CD4-positive, alpha-beta memory T cell (primary cell): ENCODE measurements at regions of chr17 and their contacts with region 1.

Region 1: GRCh38 chr17:82022981-82023374 is at the start of gene LRRC45:
- DNase-seq: peak; percentile 99 to 100 (median 100)
- H3K4me3 ChIP-seq: peak within 1 kb of the TSS; percentile 44 to 72
- H3K4me3 Mint-ChIP-seq: peak within 1 kb of the TSS; percentile 81 to 89 (median 86)
- H3K27ac ChIP-seq: peak within 1 kb of the TSS; percentile 65
- H3K27ac Mint-ChIP-seq: peak within 1 kb of the TSS in 6 of 7 donors; percentile 68 to 89 (median 78)
- H3K4me1 ChIP-seq: peaks cover 28% of the 10 kb centered on the region
- H3K4me1 Mint-ChIP-seq: peaks cover 3 to 30% (median 18%) of the 10 kb centered on the region in 4 donors
- H3K27me3 ChIP-seq: no peaks in the 10 kb centered on the region
- H3K27me3 Mint-ChIP-seq: no peaks in the 10 kb centered on the region
- total RNA-seq, gene LRRC45: 18.0 to 18.7 TPM

Region 2: DNA sequence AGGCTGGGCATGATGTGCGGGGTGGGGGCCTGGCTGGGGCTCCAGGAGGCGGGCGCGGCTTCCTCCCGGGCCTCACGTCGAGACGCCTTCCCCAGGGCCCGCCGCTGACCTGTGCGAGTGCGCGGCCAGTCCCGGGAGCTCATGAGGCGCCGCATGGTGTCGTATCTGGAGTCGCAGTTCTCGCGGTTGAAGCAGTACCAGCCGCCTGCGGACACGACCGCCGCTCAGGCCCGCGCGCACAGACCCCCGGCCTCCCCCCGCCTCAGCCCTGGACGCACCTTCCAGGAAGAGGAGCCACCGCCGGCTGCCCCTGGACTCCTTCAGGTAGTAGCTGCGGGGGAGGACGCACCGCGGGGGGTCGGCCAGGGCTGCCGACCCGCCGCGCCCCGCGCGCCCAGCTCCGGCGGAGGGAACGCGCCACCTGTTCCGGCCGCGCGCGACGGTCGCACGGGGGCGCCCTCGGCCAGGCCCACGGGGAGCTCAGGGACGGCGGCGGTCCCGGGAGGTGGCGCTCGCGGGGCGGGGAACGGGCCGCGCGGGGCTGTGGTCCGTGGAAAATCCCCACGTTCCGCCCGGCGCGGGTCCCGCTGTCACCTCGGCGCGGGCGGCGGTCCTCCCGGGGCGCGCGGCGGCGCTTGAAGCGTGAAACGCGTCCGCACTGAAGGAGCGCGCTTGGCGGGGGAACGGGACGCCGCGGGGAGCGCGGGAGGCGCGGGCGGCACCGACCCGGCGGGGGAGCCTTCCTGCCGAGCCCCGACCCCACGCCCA is 63.4 kb before region 1 on chr17:
- CTCF ChIA-PET with region 1: interaction called, 81 read pairs
- POLR2A ChIA-PET with region 1: interaction called, 57 read pairs
- intact Hi-C with region 1: loop called (anchors 1 kb)
- DNase-seq: peak; percentile 76 to 88 (median 84)
- H3K4me3 ChIP-seq: peak overlapping the region in 1 of 2 donors; percentile 37
- H3K4me3 Mint-ChIP-seq: peak overlapping the region in 4 of 8 donors; percentile 45 to 66 (median 58)
- H3K27ac ChIP-seq: no peak overlapping the region
- H3K27ac Mint-ChIP-seq: peak overlapping the region in 1 of 7 donors; percentile 69
- H3K4me1 ChIP-seq: peaks cover 7% of the 10 kb centered on the region
- H3K4me1 Mint-ChIP-seq: peaks cover 0 to 3% (median 0%) of the 10 kb centered on the region in 4 donors
- H3K27me3 ChIP-seq: peaks cover 30% of the 10 kb centered on the region
- H3K27me3 Mint-ChIP-seq: peaks cover 2 to 12% of the 10 kb centered on the region in 2 donors

Region 3: GRCh38 chr17:81977211-81978027 is 45.6 kb before region 1 on chr17 and contains the start of gene ASPSCR1:
- CTCF ChIA-PET with region 1: interaction called, 5 read pairs
- POLR2A ChIA-PET with region 1: interaction called, 7 read pairs
- intact Hi-C with region 1: loop called (anchors 1 kb)
- DNase-seq: peak; percentile 86 to 95 (median 92)
- H3K4me3 ChIP-seq: peak within 1 kb of the TSS; percentile 69 to 74
- H3K4me3 Mint-ChIP-seq: peak within 1 kb of the TSS; percentile 90 to 98 (median 96)
- H3K27ac ChIP-seq: peak within 1 kb of the TSS; percentile 80
- H3K27ac Mint-ChIP-seq: peak within 1 kb of the TSS; percentile 94 to 99 (median 98)
- H3K4me1 ChIP-seq: peaks cover 31% of the 10 kb centered on the region
- H3K4me1 Mint-ChIP-seq: peaks cover 17 to 43% (median 28%) of the 10 kb centered on the region in 4 donors
- H3K27me3 ChIP-seq: no peaks in the 10 kb centered on the region
- H3K27me3 Mint-ChIP-seq: no peaks in the 10 kb centered on the region
- total RNA-seq, gene ASPSCR1: 40.4 to 40.6 TPM

Region 4: GRCh38 chr17:82065638-82066303 is 42.8 kb after region 1 on chr17 and contains the start of gene DUS1L:
- CTCF ChIA-PET with region 1: no interaction called
- POLR2A ChIA-PET with region 1: interaction called, 14 read pairs
- intact Hi-C with region 1: no loop called
- DNase-seq: peak; percentile 44 to 78 (median 70)
- H3K4me3 ChIP-seq: peak within 1 kb of the TSS; percentile 42 to 73
- H3K4me3 Mint-ChIP-seq: peak within 1 kb of the TSS; percentile 81 to 89 (median 86)
- H3K27ac ChIP-seq: peak within 1 kb of the TSS; percentile 66
- H3K27ac Mint-ChIP-seq: peak within 1 kb of the TSS; percentile 91 to 97 (median 94)
- H3K4me1 ChIP-seq: peaks cover 28% of the 10 kb centered on the region
- H3K4me1 Mint-ChIP-seq: peaks cover 0 to 23% (median 12%) of the 10 kb centered on the region in 4 donors
- H3K27me3 ChIP-seq: no peaks in the 10 kb centered on the region
- H3K27me3 Mint-ChIP-seq: no peaks in the 10 kb centered on the region
- total RNA-seq, gene DUS1L: 139 to 141 TPM

Region 5: DNA sequence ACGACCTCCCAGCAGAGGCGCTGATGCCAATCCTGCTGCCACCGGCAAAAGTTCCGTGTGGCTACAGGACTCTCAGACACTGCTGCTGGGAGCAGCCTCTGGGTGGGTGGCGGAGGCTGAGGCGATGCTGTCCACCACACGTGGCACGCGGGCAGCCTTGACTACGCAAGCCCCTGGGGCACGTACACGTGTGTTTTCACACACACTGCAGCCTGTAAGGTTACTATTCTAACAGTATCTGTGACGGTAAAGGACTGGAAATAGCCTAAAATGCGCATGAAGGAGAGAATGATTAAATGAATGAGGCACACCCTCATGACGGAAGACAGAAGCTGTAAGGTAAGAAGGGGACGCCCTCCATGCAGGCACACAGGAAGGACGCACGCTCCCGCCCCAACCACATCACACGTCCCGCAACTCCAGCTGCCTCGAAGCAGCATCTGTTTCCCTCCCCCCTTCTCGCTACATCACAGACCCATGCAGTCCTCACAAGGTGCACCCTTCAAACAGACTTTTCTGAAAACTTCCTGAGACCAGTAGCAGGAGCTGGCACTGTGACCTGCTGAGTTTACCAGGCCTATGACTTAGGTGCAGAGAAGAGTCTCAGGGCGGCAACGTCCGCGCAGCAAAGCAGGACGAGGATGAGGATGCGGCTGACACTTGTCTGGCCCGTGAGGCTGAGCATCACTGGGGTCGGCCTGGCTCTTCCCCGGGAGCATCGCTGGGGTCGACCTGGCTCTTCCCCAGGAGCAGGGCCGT is 103.8 kb after region 1 on chr17:
- CTCF ChIA-PET with region 1: interaction called, 3 read pairs
- POLR2A ChIA-PET with region 1: interaction called, 6 read pairs
- intact Hi-C with region 1: loop called (anchors 1 kb)
- DNase-seq: peak; percentile 96 to 98 (median 97)
- H3K4me3 ChIP-seq: peak overlapping the region in 1 of 2 donors; percentile 45
- H3K4me3 Mint-ChIP-seq: peak overlapping the region; percentile 74 to 87 (median 82)
- H3K27ac ChIP-seq: peak overlapping the region; percentile 77
- H3K27ac Mint-ChIP-seq: peak overlapping the region; percentile 91 to 100 (median 99)
- H3K4me1 ChIP-seq: peaks cover 66% of the 10 kb centered on the region
- H3K4me1 Mint-ChIP-seq: peaks cover 27 to 70% (median 51%) of the 10 kb centered on the region in 4 donors
- H3K27me3 ChIP-seq: no peaks in the 10 kb centered on the region
- H3K27me3 Mint-ChIP-seq: no peaks in the 10 kb centered on the region